PC-9 (cell line): ENCODE measurements at regions of chr19 and their contacts with region 1.

Region 1: GRCh38 chr19:48784540-48784939 is 26.3 kb downstream of the BCAT2 start:
- DNase-seq: peak in 1 of 2 experiments; percentile 44
- H3K4me3 ChIP-seq: no peak overlapping the region
- H3K27ac ChIP-seq: no peak overlapping the region
- H3K4me1 ChIP-seq: peaks cover 11% of the 10 kb centered on the region
- H3K27me3 ChIP-seq: no peaks in the 10 kb centered on the region
- CTCF ChIP-seq: peak; percentile 47

Region 2: GRCh38 chr19:48340995-48341394 is 443.5 kb before region 1 on chr19:
- CTCF ChIA-PET with region 1: no interaction called
- POLR2A ChIA-PET with region 1: no interaction called
- intact Hi-C with region 1: no loop called
- DNase-seq: peak in 1 of 2 experiments; percentile 48
- H3K4me3 ChIP-seq: no peak overlapping the region
- H3K27ac ChIP-seq: no peak overlapping the region
- H3K4me1 ChIP-seq: peaks cover 10% of the 10 kb centered on the region; the same call in 1 of the 2 replicates
- H3K27me3 ChIP-seq: no peaks in the 10 kb centered on the region
- CTCF ChIP-seq: no peak

Region 3: DNA sequence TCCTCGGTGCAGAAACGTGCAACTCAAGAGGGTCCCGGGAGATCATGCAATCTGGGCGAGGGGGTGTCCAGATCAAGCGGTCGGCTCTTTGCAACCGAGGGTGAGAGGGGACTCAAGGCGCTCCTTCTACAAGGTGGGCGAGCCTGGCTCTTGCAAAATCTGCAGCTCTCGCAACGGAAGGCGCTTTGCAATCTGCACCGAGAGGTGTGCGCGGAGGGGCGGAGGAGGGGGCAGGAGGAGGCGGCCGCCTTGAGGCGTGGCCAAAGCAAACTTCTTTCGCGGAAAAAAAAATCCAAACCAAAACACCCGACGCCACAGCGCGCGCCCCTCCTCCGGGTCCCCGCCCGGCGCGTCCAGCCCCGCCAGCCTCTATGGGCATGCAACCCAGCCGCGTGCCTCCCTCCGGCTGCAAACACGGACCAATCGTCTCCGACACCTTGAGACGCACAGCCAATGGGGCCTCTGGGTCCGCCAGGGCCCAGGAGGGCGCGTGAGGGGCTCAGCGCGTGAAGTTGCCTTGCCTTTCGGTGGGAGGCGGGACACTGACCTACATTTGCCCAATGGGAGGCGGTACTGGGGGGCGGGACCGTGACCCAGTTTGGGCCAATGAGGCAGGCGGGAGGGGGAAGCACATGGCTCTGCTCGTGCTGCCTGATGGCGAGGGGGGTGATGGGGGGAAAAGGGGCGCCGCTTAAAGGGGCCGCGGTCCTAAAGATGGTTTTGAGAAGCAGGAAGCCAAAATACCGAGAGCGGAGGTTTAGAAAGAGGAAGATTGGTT is 147.2 kb before region 1 on chr19 and contains the start of gene DBP:
- CTCF ChIA-PET with region 1: no interaction called
- POLR2A ChIA-PET with region 1: interaction called, 23 read pairs
- intact Hi-C with region 1: no loop called
- DNase-seq: peak; percentile 100
- H3K4me3 ChIP-seq: peak within 1 kb of the TSS; percentile 74
- H3K27ac ChIP-seq: peak within 1 kb of the TSS; percentile 84
- H3K4me1 ChIP-seq: peaks cover 31% of the 10 kb centered on the region
- H3K27me3 ChIP-seq: no peaks in the 10 kb centered on the region
- CTCF ChIP-seq: no peak
- total RNA-seq, gene DBP: 48.2 and 48.6 TPM in 2 replicates

Region 4: GRCh38 chr19:48674921-48675824 is 109.4 kb before region 1 on chr19:
- CTCF ChIA-PET with region 1: interaction called, 3 read pairs
- POLR2A ChIA-PET with region 1: no interaction called
- intact Hi-C with region 1: loop called (anchors 2 kb)
- DNase-seq: peak; percentile 71 to 72
- H3K4me3 ChIP-seq: no peak overlapping the region
- H3K27ac ChIP-seq: no peak overlapping the region
- H3K4me1 ChIP-seq: peaks cover 32% of the 10 kb centered on the region
- H3K27me3 ChIP-seq: no peaks in the 10 kb centered on the region
- CTCF ChIP-seq: peak; percentile 92

Region 5: DNA sequence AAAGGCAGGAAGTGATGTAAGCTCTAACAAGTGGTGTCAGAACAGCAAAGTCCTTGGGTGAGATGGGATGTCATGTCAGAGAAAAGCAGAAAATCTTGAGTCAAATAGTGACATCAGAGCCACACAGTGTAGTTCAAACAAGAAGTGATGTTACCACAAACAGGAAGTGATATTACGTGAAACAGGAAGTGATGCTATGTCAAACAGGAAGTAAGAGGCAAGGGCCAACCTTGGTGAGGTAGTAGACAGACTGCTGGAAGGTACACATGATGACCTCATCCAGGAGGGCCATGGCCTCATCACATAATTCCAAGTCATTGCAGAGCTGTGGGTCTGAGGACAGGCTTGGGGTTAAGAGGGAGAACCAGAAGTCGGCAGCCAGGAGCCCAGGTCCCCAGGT is 58.0 kb before region 1 on chr19:
- CTCF ChIA-PET with region 1: no interaction called
- POLR2A ChIA-PET with region 1: no interaction called
- intact Hi-C with region 1: no loop called
- DNase-seq: no peak
- H3K4me3 ChIP-seq: no peak overlapping the region
- H3K27ac ChIP-seq: no peak overlapping the region
- H3K4me1 ChIP-seq: no peaks in the 10 kb centered on the region
- H3K27me3 ChIP-seq: no peaks in the 10 kb centered on the region
- CTCF ChIP-seq: no peak

Region 6: GRCh38 chr19:48826606-48827020 is 42.1 kb after region 1 on chr19:
- CTCF ChIA-PET with region 1: interaction called, 11 read pairs
- POLR2A ChIA-PET with region 1: no interaction called
- intact Hi-C with region 1: no loop called
- DNase-seq: no peak
- H3K4me3 ChIP-seq: no peak overlapping the region
- H3K27ac ChIP-seq: no peak overlapping the region
- H3K4me1 ChIP-seq: peaks cover 6% of the 10 kb centered on the region; the same call in 1 of the 2 replicates
- H3K27me3 ChIP-seq: no peaks in the 10 kb centered on the region
- CTCF ChIP-seq: peak; percentile 59; the same call in 1 of the 2 replicates

Region 7: DNA sequence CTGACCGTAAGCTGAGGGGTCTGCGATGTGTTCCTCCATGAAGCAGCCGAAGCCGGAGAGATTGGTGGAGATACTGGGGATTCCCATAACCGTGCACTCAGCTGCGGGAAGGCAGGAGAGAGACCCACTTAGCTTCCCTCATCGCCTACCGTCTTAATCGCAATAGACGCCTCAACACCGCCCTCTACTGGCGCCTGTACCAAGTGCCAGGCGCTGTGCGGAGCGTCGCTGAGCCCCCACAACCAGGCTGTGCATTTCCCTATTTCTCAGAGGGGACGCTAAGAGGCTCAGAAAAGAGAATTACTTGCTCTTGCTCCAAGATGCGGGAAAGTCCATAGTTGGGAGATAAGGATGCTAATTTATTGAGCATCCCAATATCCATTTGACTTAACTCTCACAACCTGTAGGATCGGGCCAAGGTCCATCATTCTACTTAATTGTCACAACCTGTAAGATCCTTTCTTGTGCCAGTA is 186.4 kb after region 1 on chr19:
- CTCF ChIA-PET with region 1: interaction called, 9 read pairs
- POLR2A ChIA-PET with region 1: no interaction called
- intact Hi-C with region 1: loop called (anchors 1 kb)
- DNase-seq: peak; percentile 45 to 64
- H3K4me3 ChIP-seq: no peak overlapping the region
- H3K27ac ChIP-seq: no peak overlapping the region
- H3K4me1 ChIP-seq: peaks cover 12% of the 10 kb centered on the region
- H3K27me3 ChIP-seq: no peaks in the 10 kb centered on the region
- CTCF ChIP-seq: peak; percentile 97

Region 8: GRCh38 chr19:49073514-49074378 is 289.2 kb after region 1 on chr19:
- CTCF ChIA-PET with region 1: no interaction called
- POLR2A ChIA-PET with region 1: no interaction called
- intact Hi-C with region 1: loop called (anchors 2 kb)
- DNase-seq: peak in 1 of 2 experiments; percentile 56
- H3K4me3 ChIP-seq: no peak overlapping the region
- H3K27ac ChIP-seq: no peak overlapping the region
- H3K4me1 ChIP-seq: peaks cover 10% of the 10 kb centered on the region; the same call in 1 of the 2 replicates
- H3K27me3 ChIP-seq: peaks cover 29% of the 10 kb centered on the region
- CTCF ChIP-seq: peak; percentile 23; the same call in 1 of the 2 replicates